Activated B cell treated with CpG ODN at 0.5 μM for 24 hours (primary cell): ENCODE measurements at regions of chr15 and their contacts with region 1.

Region 1: GRCh38 chr15:89206908-89207331 is 14.5 kb downstream of the RLBP1 start:
- DNase-seq: peak; percentile 64
- ATAC-seq: peak; percentile 99
- H3K4me3 Mint-ChIP-seq: no peak overlapping the region
- H3K27ac Mint-ChIP-seq: no peak overlapping the region
- H3K4me1 Mint-ChIP-seq: peaks cover 6% of the 10 kb centered on the region
- H3K27me3 Mint-ChIP-seq: peaks cover 6% of the 10 kb centered on the region
- CTCF ChIP-seq: peak; percentile 91

Region 2: GRCh38 chr15:89143503-89144162 is 63.3 kb before region 1 on chr15:
- CTCF ChIA-PET with region 1: no interaction called
- POLR2A ChIA-PET with region 1: no interaction called
- intact Hi-C with region 1: no loop called
- DNase-seq: no peak
- ATAC-seq: no peak
- H3K4me3 Mint-ChIP-seq: no peak overlapping the region
- H3K27ac Mint-ChIP-seq: no peak overlapping the region
- H3K4me1 Mint-ChIP-seq: peaks cover 8% of the 10 kb centered on the region
- H3K27me3 Mint-ChIP-seq: no peaks in the 10 kb centered on the region
- CTCF ChIP-seq: no peak

Region 3: GRCh38 chr15:89195836-89196235 is 11.1 kb before region 1 on chr15:
- CTCF ChIA-PET with region 1: interaction called, 17 read pairs
- POLR2A ChIA-PET with region 1: no interaction called
- intact Hi-C with region 1: no loop called
- DNase-seq: no peak
- ATAC-seq: no peak
- H3K4me3 Mint-ChIP-seq: no peak overlapping the region
- H3K27ac Mint-ChIP-seq: no peak overlapping the region
- H3K4me1 Mint-ChIP-seq: no peaks in the 10 kb centered on the region
- H3K27me3 Mint-ChIP-seq: no peaks in the 10 kb centered on the region
- CTCF ChIP-seq: no peak

Region 4: DNA sequence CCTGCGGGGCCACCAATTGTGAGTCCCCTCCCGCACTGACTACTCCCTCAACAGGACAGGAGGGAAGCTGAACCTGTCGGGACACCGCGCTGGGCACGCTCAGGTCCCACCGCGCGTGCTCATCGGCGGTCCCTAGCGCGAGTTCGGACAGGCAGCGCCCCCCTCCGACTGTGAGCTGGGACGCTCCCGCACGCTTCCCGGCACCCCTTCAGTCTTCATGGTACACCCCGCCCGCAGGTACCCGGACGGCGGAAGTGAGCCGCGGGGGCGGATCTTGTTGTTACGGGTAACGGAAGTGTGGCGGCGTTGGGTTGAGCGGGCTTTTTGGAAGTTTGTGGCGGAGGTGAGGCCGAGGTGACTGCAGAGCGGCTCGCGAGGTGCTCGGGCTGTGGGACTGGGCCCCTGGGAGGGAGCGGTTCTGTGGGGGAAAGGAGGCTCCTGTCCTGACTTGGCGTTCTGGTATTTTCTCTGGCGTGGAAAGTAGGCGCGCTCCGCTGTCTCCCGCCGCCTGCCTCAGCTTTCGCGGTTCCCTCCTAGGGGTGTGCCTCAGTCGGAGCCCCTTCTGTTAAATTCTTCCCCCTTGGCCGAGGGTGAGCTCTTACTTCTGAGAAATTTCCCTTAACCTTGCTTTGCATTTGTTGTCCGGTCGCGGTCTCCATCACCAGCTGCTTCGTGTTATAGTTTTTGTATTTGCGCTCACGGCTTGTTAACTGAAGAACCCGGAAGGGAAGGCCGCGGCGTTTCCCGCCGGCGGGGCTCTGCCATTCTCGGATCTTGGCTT is 37.0 kb after region 1 on chr15 and contains the start of gene FANCI:
- CTCF ChIA-PET with region 1: interaction called, 3 read pairs
- POLR2A ChIA-PET with region 1: no interaction called
- intact Hi-C with region 1: loop called (anchors 2 kb)
- DNase-seq: peak; percentile 94
- ATAC-seq: peak; percentile 97
- H3K4me3 Mint-ChIP-seq: peak within 1 kb of the TSS; percentile 90
- H3K27ac Mint-ChIP-seq: peak within 1 kb of the TSS; percentile 75
- H3K4me1 Mint-ChIP-seq: peaks cover 29% of the 10 kb centered on the region
- H3K27me3 Mint-ChIP-seq: no peaks in the 10 kb centered on the region
- CTCF ChIP-seq: no peak
- total RNA-seq, gene FANCI: 13.8 and 16.6 TPM in 2 replicates

Region 5: GRCh38 chr15:89430530-89431341 is 223.8 kb after region 1 on chr15:
- CTCF ChIA-PET with region 1: interaction called, 4 read pairs
- POLR2A ChIA-PET with region 1: no interaction called
- intact Hi-C with region 1: loop called (anchors 1 kb)
- DNase-seq: peak; percentile 94
- ATAC-seq: peak; percentile 99
- H3K4me3 Mint-ChIP-seq: peak overlapping the region; percentile 85
- H3K27ac Mint-ChIP-seq: peak overlapping the region; percentile 38
- H3K4me1 Mint-ChIP-seq: peaks cover 4% of the 10 kb centered on the region
- H3K27me3 Mint-ChIP-seq: peaks cover 10% of the 10 kb centered on the region
- CTCF ChIP-seq: peak; percentile 81

Region 6: GRCh38 chr15:89472785-89473256 is 265.9 kb after region 1 on chr15:
- CTCF ChIA-PET with region 1: no interaction called
- POLR2A ChIA-PET with region 1: no interaction called
- intact Hi-C with region 1: loop called (anchors 1 kb)
- DNase-seq: peak; percentile 62
- ATAC-seq: peak; percentile 86
- H3K4me3 Mint-ChIP-seq: no peak overlapping the region
- H3K27ac Mint-ChIP-seq: no peak overlapping the region
- H3K4me1 Mint-ChIP-seq: no peaks in the 10 kb centered on the region
- H3K27me3 Mint-ChIP-seq: peaks cover 30% of the 10 kb centered on the region
- CTCF ChIP-seq: no peak

Region 7: DNA sequence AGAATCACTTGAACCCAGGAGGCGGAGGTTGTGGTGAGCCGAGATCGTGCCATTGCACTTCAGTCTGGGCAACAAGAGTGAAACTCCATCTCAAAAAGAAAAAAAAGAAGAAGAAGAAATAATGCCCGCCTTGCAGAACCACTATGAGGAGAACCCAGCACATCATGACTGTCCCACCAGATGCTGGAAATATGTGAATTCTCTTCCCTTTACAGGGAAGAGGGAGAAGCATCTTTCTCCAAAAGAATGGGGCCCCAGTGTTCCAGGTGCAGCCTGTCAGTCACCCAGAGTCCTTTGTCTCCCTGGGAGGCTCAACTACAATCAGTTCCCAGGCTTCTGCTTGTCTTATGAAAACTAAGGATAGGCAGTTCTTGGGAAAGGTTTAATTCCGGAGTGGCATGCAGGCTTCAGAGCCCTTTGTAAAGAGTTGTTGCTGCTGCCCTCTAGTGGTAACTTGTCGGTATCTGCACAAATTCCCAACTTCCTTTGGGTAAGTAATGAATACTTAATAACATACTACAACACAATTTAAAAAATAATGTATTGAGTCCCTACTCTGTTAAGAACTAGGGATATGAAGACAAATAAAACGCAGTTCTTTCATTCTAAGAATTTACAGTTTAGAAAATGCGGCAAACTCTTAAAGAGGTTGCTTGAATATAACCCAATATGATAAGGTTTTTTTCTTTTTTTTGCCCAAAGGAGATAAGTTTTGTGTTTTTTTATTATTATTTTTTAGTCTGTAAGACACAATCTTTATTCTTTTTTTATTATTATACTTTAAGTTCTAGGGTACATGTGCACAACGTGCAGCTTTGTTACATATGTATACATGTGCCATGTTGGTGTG is 349.7 kb after region 1 on chr15:
- CTCF ChIA-PET with region 1: interaction called, 3 read pairs
- POLR2A ChIA-PET with region 1: no interaction called
- intact Hi-C with region 1: loop called (anchors 2 kb)
- DNase-seq: no peak
- ATAC-seq: peak; percentile 31
- H3K4me3 Mint-ChIP-seq: no peak overlapping the region
- H3K27ac Mint-ChIP-seq: no peak overlapping the region
- H3K4me1 Mint-ChIP-seq: no peaks in the 10 kb centered on the region
- H3K27me3 Mint-ChIP-seq: peaks cover 9% of the 10 kb centered on the region
- CTCF ChIP-seq: peak; percentile 67

Region 8: DNA sequence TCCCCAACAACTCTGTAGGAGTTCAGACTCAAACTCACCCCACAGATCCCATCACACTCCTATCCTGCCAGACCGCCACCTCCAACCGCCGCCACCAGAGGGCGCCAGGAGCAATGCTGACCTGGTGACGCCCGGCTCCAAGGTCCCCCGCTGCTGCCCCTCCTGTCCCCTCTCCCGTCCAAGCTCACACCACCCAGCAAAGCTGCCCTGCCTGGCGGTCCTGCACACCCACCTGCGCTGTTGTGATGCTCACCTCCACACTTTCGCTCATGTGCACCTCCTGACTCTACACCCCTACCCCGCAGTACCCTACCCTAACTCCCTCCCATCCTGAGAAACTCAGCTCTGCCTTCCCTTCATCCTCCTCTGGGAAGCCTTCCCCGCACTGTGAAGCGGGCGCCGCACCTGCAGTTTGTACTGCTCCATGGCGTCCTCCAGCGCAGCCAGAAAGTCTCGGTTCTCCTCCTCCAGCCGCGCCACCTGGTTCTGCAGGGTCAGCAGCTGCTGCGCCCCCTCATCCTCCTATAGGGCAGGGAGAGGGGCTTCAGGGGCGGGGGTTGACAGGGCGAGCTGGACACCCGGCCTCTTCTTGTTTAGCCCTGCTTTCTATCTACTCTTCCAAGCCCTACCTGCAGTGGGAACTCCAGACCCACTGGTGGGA is 440.4 kb after region 1 on chr15:
- CTCF ChIA-PET with region 1: no interaction called
- POLR2A ChIA-PET with region 1: no interaction called
- intact Hi-C with region 1: no loop called
- DNase-seq: peak; percentile 50
- ATAC-seq: peak; percentile 57
- H3K4me3 Mint-ChIP-seq: no peak overlapping the region
- H3K27ac Mint-ChIP-seq: no peak overlapping the region
- H3K4me1 Mint-ChIP-seq: no peaks in the 10 kb centered on the region
- H3K27me3 Mint-ChIP-seq: peaks cover 3% of the 10 kb centered on the region
- CTCF ChIP-seq: no peak